Activated B cell treated with CpG ODN at 0.5 μM for 24 hours (primary cell): ENCODE measurements at regions of chr2 and their contacts with region 1.

Region 1: DNA sequence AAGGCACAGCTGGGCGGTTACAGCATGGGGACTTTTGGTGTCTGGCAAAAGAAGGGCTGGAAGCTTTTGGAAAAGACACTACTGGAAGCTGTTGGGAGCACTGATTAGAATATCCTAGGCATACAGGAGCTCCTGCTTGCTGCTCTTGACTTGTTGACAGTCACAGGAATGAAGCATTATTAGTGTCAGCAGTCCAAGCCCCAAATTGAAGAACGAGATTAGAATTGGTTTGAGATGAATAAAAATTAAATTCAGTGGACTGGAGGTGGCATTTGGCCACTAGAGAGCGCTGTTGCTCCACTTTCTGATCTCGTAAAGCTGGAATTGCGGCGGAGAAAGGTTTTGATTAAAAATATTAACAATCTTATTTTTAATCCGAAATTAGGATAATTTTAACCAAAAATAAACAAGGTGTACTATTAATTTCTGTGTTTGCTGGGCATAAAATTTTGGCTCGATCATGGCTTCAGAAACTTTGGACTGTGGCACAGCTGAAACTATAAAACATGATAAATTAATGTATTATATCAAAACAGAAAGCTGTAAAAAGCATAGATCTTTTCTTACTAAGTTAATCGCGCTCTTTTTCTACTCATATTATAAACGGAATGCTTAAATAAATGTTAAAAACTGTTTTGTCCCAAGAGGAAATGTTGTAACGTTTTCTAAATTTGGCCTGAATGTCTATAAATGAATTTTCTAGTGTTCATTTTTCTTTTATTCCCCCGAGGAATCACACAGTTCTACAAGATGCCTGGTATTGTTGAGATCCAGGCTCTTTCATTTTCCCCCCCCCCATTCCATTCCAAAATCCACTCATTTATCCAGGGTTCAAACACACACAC is 2.4 kb upstream of the HOXD8 start:
- DNase-seq: peak; percentile 42
- ATAC-seq: no peak
- H3K4me3 Mint-ChIP-seq: no peak overlapping the region
- H3K27ac Mint-ChIP-seq: no peak overlapping the region
- H3K4me1 Mint-ChIP-seq: peaks cover 32% of the 10 kb centered on the region
- H3K27me3 Mint-ChIP-seq: peaks cover 63% of the 10 kb centered on the region
- CTCF ChIP-seq: peak; percentile 61

Region 2: GRCh38 chr2:176096986-176097819 is 29.9 kb before region 1 on chr2:
- CTCF ChIA-PET with region 1: interaction called, 17 read pairs
- POLR2A ChIA-PET with region 1: no interaction called
- intact Hi-C with region 1: loop called (anchors 5 kb)
- DNase-seq: peak; percentile 42
- ATAC-seq: peak; percentile 68
- H3K4me3 Mint-ChIP-seq: peak overlapping the region; percentile 76
- H3K27ac Mint-ChIP-seq: no peak overlapping the region
- H3K4me1 Mint-ChIP-seq: peaks cover 19% of the 10 kb centered on the region
- H3K27me3 Mint-ChIP-seq: peaks cover 77% of the 10 kb centered on the region
- CTCF ChIP-seq: no peak

Region 3: GRCh38 chr2:176454893-176455811 is 328.0 kb after region 1 on chr2:
- CTCF ChIA-PET with region 1: interaction called, 84 read pairs
- POLR2A ChIA-PET with region 1: no interaction called
- intact Hi-C with region 1: loop called (anchors 1 kb)
- DNase-seq: peak; percentile 62
- ATAC-seq: peak; percentile 61
- H3K4me3 Mint-ChIP-seq: no peak overlapping the region
- H3K27ac Mint-ChIP-seq: no peak overlapping the region
- H3K4me1 Mint-ChIP-seq: peaks cover 4% of the 10 kb centered on the region
- H3K27me3 Mint-ChIP-seq: peaks cover 11% of the 10 kb centered on the region
- CTCF ChIP-seq: peak; percentile 81

Region 4: GRCh38 chr2:176638167-176639015 is 511.2 kb after region 1 on chr2:
- CTCF ChIA-PET with region 1: interaction called, 24 read pairs
- POLR2A ChIA-PET with region 1: no interaction called
- intact Hi-C with region 1: loop called (anchors 1 kb)
- DNase-seq: peak; percentile 24
- ATAC-seq: peak; percentile 79
- H3K4me3 Mint-ChIP-seq: peak overlapping the region; percentile 66
- H3K27ac Mint-ChIP-seq: no peak overlapping the region
- H3K4me1 Mint-ChIP-seq: peaks cover 3% of the 10 kb centered on the region
- H3K27me3 Mint-ChIP-seq: peaks cover 45% of the 10 kb centered on the region
- CTCF ChIP-seq: peak; percentile 64

Region 5: DNA sequence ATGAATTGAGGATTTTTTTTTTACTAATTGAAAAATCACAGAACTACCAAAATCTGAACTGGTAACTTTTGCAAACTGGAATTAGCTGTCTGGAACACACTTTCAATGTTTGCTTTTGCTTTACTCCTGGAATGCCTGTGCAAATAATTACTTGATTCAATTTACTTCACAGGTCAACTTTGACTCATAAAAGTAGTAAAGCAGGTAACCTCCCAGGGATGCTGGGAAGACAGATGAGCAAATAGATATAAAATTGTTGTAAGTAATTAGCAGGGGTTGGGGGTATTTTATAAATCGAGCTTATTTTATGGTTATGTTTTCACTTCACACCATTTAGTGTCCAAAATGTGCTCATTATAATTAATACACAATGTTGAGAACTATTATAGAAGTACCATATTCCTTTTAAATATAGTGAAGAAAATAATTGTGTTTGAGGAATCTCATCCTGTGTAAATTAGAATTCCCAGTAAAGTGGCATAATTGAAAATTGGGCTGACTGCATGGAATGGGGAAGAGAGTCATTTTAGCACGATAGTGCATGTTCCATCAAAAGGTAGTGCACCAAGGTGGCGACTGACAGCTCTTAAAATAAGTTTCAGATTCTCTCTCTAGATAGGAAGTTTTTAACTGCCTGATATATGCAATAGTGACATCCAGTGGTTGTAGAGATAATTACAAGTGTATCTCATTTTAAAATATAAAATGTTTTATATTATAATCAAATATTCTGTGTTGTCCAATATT is 687.3 kb after region 1 on chr2:
- CTCF ChIA-PET with region 1: interaction called, 13 read pairs
- POLR2A ChIA-PET with region 1: no interaction called
- intact Hi-C with region 1: loop called (anchors 1 kb)
- DNase-seq: no peak
- ATAC-seq: no peak
- H3K4me3 Mint-ChIP-seq: no peak overlapping the region
- H3K27ac Mint-ChIP-seq: no peak overlapping the region
- H3K4me1 Mint-ChIP-seq: peaks cover 2% of the 10 kb centered on the region
- H3K27me3 Mint-ChIP-seq: peaks cover 3% of the 10 kb centered on the region
- CTCF ChIP-seq: no peak

Region 6: DNA sequence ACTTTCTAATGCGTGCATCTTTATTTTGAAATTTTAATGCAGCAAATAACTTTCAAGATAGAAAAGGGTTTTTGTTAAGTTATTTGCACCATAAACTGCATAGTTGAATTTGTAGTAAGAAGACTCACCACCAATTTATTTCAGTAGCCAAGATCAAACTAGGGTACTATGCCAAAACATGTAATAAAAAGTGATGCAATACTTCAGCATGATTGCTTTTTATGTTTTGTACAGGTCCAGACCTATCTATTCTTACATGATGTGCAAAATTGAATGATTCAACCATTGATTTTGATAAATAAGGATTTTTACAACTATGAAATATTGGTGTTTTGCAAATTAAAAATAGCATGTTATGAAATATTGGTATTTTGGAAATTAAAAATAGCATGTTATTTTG is 1292.1 kb after region 1 on chr2:
- CTCF ChIA-PET with region 1: no interaction called
- POLR2A ChIA-PET with region 1: no interaction called
- intact Hi-C with region 1: loop called (anchors 5 kb)
- DNase-seq: no peak
- ATAC-seq: no peak
- H3K4me3 Mint-ChIP-seq: no peak overlapping the region
- H3K27ac Mint-ChIP-seq: no peak overlapping the region
- H3K4me1 Mint-ChIP-seq: peaks cover 5% of the 10 kb centered on the region
- H3K27me3 Mint-ChIP-seq: no peaks in the 10 kb centered on the region
- CTCF ChIP-seq: no peak